ENCODE measurements at regions of chr10 and their contacts with region 1.

Region 1: DNA sequence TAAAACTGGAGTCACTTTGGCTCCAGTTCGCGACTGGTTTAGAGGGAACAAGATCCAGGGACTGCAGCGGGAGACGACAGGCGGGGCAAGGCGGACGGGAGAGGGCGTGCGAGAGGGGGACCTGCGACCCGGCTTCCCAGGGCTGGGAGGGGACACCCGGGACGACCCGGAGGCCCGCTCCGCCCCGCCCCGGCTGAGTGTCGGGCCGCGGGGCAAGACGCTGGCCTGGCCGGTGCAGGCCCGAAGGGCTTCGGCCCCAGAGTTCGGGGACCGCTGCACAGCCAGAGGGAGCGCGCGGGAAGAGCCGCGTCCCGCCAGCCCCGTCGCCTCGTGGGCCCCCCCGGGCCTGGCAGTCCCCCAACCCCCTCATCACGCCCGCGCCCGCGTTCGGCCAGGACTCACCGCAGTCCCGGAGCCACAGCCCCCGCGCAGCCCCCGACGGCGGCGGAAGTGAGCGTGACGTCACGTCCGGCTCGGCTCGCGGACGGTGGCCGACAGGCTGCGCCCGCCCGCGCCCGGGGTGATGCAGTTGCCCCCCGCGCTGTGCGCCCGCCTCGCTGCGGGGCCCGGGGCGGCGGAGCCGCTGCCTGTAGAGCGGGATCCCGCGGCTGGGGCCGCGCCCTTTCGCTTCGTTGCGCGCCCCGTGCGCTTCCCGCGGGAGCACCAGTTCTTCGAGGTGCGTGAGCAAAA is at the starts of genes TUBGCP2 and ZNF511:
- DNase-seq: peak; percentile 85 to 95 (median 94)
- H3K4me3 ChIP-seq: peak within 1 kb of the TSS; percentile 88
- H3K4me3 Mint-ChIP-seq: peak within 1 kb of the TSS; percentile 94 to 99 (median 99)
- H3K27ac ChIP-seq: peak within 1 kb of the TSS; percentile 99
- H3K27ac Mint-ChIP-seq: peak within 1 kb of the TSS; percentile 98 to 100 (median 100)
- H3K4me1 ChIP-seq: peaks cover 18% of the 10 kb centered on the region
- H3K4me1 Mint-ChIP-seq: peaks cover 30 to 41% (median 30%) of the 10 kb centered on the region in 3 donors
- H3K27me3 ChIP-seq: no peaks in the 10 kb centered on the region
- H3K27me3 Mint-ChIP-seq: peaks cover 0 to 7% of the 10 kb centered on the region in 2 donors
- total RNA-seq, gene TUBGCP2: 67.9 to 68.1 TPM
- total RNA-seq, gene ZNF511: 82.2 to 83.2 TPM

Region 2: DNA sequence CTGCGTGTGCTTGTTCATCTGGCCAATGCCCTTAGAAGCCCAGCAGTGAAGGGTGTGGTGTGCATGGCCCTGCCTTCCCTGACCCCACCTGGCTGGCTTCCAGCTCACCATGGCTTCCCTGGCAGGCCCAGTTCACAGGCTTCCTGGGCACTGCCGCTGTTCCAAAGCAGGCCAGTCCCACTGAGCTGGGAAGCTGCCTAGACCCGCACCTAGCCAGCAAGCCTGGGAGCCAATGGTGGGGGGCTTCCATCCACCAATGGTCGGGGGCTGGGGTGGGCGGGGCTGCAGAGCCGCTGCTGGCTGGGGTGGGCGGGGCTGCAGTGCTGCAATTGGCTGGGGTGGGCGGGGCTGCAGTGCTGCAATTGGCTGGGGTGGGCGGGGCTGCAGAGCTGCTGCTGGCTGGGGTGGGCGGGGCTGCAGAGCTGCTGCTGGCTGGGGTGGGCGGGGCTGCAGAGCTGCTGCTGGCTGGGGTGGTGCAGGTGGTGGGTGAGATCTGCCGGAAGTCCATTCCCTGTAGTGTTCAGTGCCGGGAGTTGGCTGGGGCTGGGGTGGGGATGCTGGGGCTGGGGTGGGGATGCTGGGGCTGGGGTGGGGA is 15.7 kb after region 1 on chr10:
- CTCF ChIA-PET with region 1: interaction called, 17 read pairs
- POLR2A ChIA-PET with region 1: no interaction called
- DNase-seq: peak; percentile 46 to 75 (median 55)
- H3K4me3 ChIP-seq: no peak overlapping the region
- H3K4me3 Mint-ChIP-seq: no peak overlapping the region
- H3K27ac ChIP-seq: no peak overlapping the region
- H3K27ac Mint-ChIP-seq: no peak overlapping the region
- H3K4me1 ChIP-seq: peaks cover 13% of the 10 kb centered on the region
- H3K4me1 Mint-ChIP-seq: peaks cover 1 to 15% (median 3%) of the 10 kb centered on the region in 3 donors
- H3K27me3 ChIP-seq: peaks cover 36% of the 10 kb centered on the region
- H3K27me3 Mint-ChIP-seq: peaks cover 14 to 39% of the 10 kb centered on the region in 2 donors

Region 3: DNA sequence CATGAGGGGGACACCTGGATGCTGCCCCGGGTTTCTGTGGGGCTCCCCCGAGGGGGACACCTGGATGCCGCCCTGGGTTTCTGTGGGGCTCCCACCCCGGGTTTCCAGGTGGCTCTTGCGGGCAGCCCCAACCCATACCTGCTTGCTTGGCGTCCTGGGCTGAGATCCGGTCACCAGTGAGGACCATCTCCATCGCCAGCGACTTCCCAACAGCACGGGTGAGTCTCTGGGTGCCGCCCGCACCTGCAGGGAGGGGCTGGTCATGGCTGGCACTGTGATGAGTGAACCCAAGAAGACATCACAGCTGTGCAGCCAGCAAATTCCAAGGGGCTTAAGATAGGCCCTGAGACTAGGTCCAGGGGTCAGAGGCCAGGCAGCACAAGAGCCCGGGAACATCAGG is 58.2 kb after region 1 on chr10:
- CTCF ChIA-PET with region 1: no interaction called
- POLR2A ChIA-PET with region 1: no interaction called
- DNase-seq: peak in 1 of 5 donors; percentile 33
- H3K4me3 ChIP-seq: no peak overlapping the region
- H3K4me3 Mint-ChIP-seq: no peak overlapping the region
- H3K27ac ChIP-seq: no peak overlapping the region
- H3K27ac Mint-ChIP-seq: no peak overlapping the region
- H3K4me1 ChIP-seq: no peaks in the 10 kb centered on the region
- H3K4me1 Mint-ChIP-seq: peaks cover 2 to 8% (median 6%) of the 10 kb centered on the region in 3 donors
- H3K27me3 ChIP-seq: no peaks in the 10 kb centered on the region
- H3K27me3 Mint-ChIP-seq: no peaks in the 10 kb centered on the region